ENCODE measurements at regions of chr4 and their contacts with region 1.

Region 1: DNA sequence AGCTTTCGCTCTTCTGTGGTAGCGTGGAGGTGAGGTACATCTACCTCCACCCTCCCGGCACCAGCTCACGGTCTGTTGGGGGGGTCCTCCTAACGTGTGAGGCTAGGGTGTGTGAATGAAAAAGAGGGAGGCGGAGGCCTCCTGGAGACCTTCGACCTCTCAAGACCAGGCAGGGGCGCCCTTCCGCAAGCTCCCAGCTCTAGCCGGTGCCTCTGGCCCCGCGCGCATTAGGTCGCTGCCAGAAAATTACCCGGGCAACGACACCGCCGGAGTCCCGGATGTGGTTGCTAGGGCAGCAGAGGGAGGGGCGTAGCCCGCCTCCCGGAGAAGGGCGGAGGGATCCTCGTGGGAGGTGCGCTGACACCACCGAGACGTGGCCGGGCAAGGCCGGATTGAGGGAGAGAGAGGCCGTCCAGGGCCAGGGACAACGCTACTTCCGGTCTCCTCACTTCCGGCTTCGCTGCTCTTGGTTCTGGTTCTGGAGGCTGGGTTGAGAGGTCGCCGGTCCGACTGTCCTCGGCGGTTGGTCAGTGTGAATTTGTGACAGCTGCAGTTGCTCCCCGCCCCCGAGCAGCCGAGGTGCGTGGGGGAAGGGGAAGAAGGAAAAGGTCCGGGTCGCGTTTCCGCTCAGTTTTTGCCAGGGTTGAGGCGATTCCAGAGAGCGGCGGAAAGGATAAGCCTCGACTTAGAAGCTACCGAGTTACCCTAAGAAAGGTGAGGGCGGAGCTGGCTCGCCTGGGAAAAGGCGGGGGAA is at the starts of genes ARFIP1 and TIGD4:
- DNase-seq: peak; percentile 97 to 99 (median 98)
- ATAC-seq: peak; percentile 97
- H3K4me3 ChIP-seq: peak within 1 kb of the TSS; percentile 56
- H3K4me1 ChIP-seq: peaks cover 16% of the 10 kb centered on the region
- CTCF ChIP-seq: peak; percentile 6
- total RNA-seq, gene ARFIP1: 41.9 to 81.4 (median 50.1) TPM
- total RNA-seq, gene TIGD4: 0.23 to 0.39 (median 0.38) TPM

Region 2: GRCh38 chr4:152956650-152957436 is 177.2 kb after region 1 on chr4:
- intact Hi-C with region 1: loop called in 1 of 2 experiments (anchors 5 kb)
- DNase-seq: peak; percentile 64 to 70 (median 66)
- ATAC-seq: peak; percentile 85
- H3K4me3 ChIP-seq: no peak overlapping the region
- H3K4me1 ChIP-seq: peaks cover 25% of the 10 kb centered on the region
- CTCF ChIP-seq: no peak